Dendritic cell treated with granulocyte-macrophage colony-stimulating factor and Interleukin-4, amounts not matched to agents 40 ng/mL and 50 ng/mL, for 4 days (primary cell): ENCODE measurements at regions of chr19 and their contacts with region 1.

Region 1: GRCh38 chr19:3544742-3545668 is 6.0 kb downstream of the TEKTIP1 start:
- H3K4me3 Mint-ChIP-seq: no peak overlapping the region
- H3K27ac Mint-ChIP-seq: peak overlapping the region; percentile 54
- H3K4me1 Mint-ChIP-seq: peaks cover 43% of the 10 kb centered on the region
- H3K27me3 Mint-ChIP-seq: no peaks in the 10 kb centered on the region

Region 2: DNA sequence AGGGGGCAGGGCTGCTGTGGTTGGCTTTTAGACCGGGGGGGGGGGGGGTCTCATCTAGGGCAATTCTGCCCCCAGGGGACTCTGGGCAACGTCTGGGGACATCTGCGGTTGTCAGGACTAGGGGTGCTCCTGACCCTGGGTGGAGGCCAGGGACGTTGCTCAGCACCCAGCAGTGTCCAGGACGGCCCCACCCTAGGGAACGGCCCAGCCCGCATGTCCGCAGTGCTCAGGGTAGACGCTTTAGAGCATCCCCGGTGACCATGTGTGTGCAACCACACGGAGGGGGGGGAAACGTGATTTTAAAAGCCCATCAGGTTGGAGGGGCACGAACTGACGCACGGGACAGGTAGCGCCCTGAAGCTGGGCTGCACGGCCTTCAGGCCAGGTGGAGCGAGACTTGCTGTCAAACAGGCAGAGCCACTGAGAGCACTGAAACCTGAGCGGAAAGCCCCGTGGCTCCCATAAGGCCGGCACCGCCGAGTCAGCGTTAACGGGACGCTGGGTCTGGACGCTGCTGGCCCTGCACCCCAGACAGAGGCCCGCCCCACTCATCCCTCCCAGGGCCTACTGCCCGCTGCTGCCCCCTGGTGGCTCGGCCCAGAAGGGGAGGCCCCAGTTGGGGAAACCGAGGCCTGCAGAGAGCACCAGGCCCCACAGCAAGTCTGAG is 73.3 kb after region 1 on chr19:
- intact Hi-C with region 1: loop called (anchors 2 kb)
- H3K4me3 Mint-ChIP-seq: no peak overlapping the region
- H3K27ac Mint-ChIP-seq: peak overlapping the region; percentile 43
- H3K4me1 Mint-ChIP-seq: peaks cover 27% of the 10 kb centered on the region
- H3K27me3 Mint-ChIP-seq: no peaks in the 10 kb centered on the region

Region 3: GRCh38 chr19:3708208-3708931 is 163.4 kb after region 1 on chr19 and contains the start of gene TJP3:
- intact Hi-C with region 1: loop called (anchors 5 kb)
- H3K4me3 Mint-ChIP-seq: no peak within 1 kb of the TSS
- H3K27ac Mint-ChIP-seq: peak within 1 kb of the TSS; percentile 64
- H3K4me1 Mint-ChIP-seq: peaks cover 45% of the 10 kb centered on the region
- H3K27me3 Mint-ChIP-seq: peaks cover 39% of the 10 kb centered on the region